ENCODE measurements at regions of chr10 and their contacts with region 1.

Region 1: DNA sequence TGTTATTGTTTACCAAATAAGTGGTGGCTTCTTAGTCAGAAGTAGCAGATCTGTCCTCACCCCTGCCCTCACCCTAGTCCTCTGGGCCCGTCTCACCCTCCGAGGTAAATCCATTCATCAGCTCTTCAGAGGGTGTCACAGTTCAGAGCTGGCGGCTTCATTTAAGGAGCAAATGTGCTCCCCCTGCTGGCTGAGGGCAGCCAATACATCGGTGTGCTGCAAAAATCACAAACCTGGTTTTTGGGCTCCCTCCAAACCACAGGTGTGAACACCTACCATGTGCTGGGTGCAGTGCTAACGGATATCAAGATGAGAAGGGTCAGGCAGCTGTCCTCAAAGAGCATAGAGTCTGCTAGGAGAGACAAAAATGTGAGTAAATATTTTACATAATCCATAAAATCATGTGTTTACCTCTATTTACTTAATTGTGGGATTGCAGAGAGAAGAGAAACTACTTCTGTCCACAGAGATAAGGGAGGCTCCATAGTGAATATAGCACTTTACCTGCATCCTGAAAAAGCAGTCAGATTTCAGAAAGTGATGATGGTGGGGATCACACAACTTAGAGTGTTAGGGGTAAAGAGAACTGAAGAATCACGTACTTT is 15.5 kb upstream of the CRTAC1 start:
- DNase-seq: peak; percentile 24 to 41
- ATAC-seq: peak; percentile 13 to 72 (median 48)
- H3K4me3 ChIP-seq: no peak overlapping the region
- H3K27ac ChIP-seq: no peak overlapping the region
- H3K4me1 ChIP-seq: peaks cover 0 to 21% (median 10%) of the 10 kb centered on the region in 9 donors
- H3K27me3 ChIP-seq: peaks cover 0 to 25% (median 20%) of the 10 kb centered on the region in 7 donors
- CTCF ChIP-seq: peak; percentile 75 to 92 (median 86)

Region 2: GRCh38 chr10:97759158-97759887 is 286.6 kb before region 1 on chr10:
- intact Hi-C with region 1: loop called in 4 of 10 experiments (anchors 5 to 10 kb)
- DNase-seq: peak; percentile 53 to 65
- ATAC-seq: peak; percentile 75 to 93 (median 78)
- H3K4me3 ChIP-seq: no peak overlapping the region
- H3K27ac ChIP-seq: no peak overlapping the region
- H3K4me1 ChIP-seq: peaks cover 0 to 12% (median 0%) of the 10 kb centered on the region in 9 donors
- H3K27me3 ChIP-seq: no peaks in the 10 kb centered on the region
- CTCF ChIP-seq: peak; percentile 73 to 91 (median 88)

Region 3: GRCh38 chr10:97792141-97792721 is 253.7 kb before region 1 on chr10:
- intact Hi-C with region 1: loop called in 2 of 10 experiments (anchors 10 kb)
- DNase-seq: peak; percentile 60 to 63
- ATAC-seq: peak in 3 of 8 donors; percentile 30 to 70 (median 59)
- H3K4me3 ChIP-seq: no peak overlapping the region
- H3K27ac ChIP-seq: no peak overlapping the region
- H3K4me1 ChIP-seq: peaks cover 4 to 17% (median 10%) of the 10 kb centered on the region in 9 donors
- H3K27me3 ChIP-seq: peaks cover 0 to 23% (median 9%) of the 10 kb centered on the region in 7 donors
- CTCF ChIP-seq: peak in 8 of 9 donors; percentile 74 to 93 (median 88)

Region 4: DNA sequence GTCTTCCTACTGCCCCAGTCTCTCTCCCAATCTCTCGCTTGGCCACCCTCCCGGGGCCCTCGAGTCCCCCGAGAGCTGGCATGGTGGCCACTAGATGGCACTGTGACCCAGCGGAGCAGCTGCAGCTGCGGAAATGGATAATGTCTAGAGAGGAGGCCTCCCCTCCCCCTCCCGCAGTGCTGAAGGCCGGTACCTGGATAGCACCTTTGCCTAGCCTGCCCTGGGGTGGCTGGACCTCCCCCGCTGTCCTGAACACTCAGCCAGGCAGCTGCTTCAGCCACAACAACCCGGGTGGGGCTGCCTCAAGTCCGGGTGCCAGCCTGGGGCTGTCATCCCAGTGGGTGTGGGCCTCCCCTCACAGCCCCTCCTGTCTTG is 131.1 kb before region 1 on chr10:
- intact Hi-C with region 1: loop called in 9 of 10 experiments (anchors 1 to 5 kb)
- DNase-seq: peak; percentile 69 to 80
- ATAC-seq: peak; percentile 77 to 90 (median 86)
- H3K4me3 ChIP-seq: no peak overlapping the region
- H3K27ac ChIP-seq: no peak overlapping the region
- H3K4me1 ChIP-seq: peaks cover 0 to 21% (median 9%) of the 10 kb centered on the region in 9 donors
- H3K27me3 ChIP-seq: peaks cover 0 to 8% (median 4%) of the 10 kb centered on the region in 7 donors
- CTCF ChIP-seq: peak; percentile 88 to 95 (median 90)

Region 5: DNA sequence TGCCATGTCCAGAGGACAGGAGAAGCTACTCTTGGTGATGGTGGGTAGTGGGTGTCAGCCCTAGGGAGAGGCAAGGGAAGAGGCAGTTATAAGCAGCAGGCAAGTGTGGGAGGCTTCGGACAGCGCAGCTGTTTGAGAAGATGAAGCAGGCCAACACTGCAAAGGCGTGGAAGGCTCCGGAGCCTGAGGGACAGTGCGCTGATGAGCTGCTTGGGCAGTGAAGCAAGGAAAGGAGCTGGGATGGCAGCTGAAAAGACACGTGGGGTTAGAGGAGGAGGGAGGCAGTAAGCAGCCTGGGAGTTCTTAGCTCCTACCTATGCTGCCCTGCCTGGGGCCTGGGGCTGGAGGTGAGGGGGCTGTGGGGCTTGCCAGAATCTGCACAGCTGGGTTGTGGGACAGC is 34.6 kb after region 1 on chr10:
- intact Hi-C with region 1: no loop called
- DNase-seq: no peak
- ATAC-seq: peak in 1 of 8 donors; percentile 22
- H3K4me3 ChIP-seq: no peak overlapping the region
- H3K27ac ChIP-seq: no peak overlapping the region
- H3K4me1 ChIP-seq: no peaks in the 10 kb centered on the region
- H3K27me3 ChIP-seq: peaks cover 0 to 14% (median 0%) of the 10 kb centered on the region in 7 donors
- CTCF ChIP-seq: no peak